ENCODE measurements at regions of chr7 and their contacts with region 1.

Region 1: GRCh38 chr7:30983042-30983913 is 19.5 kb downstream of the GHRHR start:
- DNase-seq: peak; percentile 97
- ATAC-seq: peak; percentile 62
- H3K4me3 Mint-ChIP-seq: peak overlapping the region; percentile 67
- H3K27ac Mint-ChIP-seq: no peak overlapping the region
- H3K4me1 Mint-ChIP-seq: peaks cover 53% of the 10 kb centered on the region
- H3K27me3 Mint-ChIP-seq: peaks cover 7% of the 10 kb centered on the region
- CTCF ChIP-seq: peak; percentile 90

Region 2: GRCh38 chr7:30791114-30791779 is 192.0 kb before region 1 on chr7:
- CTCF ChIA-PET with region 1: interaction called, 13 read pairs
- POLR2A ChIA-PET with region 1: no interaction called
- DNase-seq: peak; percentile 52
- ATAC-seq: peak; percentile 81
- H3K4me3 Mint-ChIP-seq: no peak overlapping the region
- H3K27ac Mint-ChIP-seq: no peak overlapping the region
- H3K4me1 Mint-ChIP-seq: peaks cover 7% of the 10 kb centered on the region; the same call in 1 of the 2 replicates
- H3K27me3 Mint-ChIP-seq: no peaks in the 10 kb centered on the region
- CTCF ChIP-seq: no peak

Region 3: DNA sequence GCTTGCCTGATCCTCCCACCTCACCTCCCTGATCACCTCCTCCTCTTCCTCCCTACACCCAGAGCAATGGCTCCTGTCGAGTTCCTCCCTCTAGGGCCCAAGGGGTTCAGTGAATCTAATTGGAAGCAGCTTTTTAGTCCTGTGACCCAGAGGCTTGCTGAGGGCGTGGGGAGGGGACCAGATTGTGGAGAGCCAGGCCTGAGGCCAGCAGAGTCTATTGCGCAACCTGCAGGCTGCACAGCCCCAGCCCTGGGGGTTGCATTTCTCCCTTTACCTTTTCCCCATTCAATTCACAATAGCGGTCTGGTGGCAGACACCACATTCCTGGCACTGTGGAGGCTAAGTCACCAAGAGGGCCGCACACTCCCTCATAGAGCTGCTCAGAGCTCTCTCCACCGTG is 13.0 kb after region 1 on chr7:
- CTCF ChIA-PET with region 1: interaction called, 17 read pairs
- POLR2A ChIA-PET with region 1: interaction called, 4 read pairs
- DNase-seq: no peak
- ATAC-seq: no peak
- H3K4me3 Mint-ChIP-seq: no peak overlapping the region
- H3K27ac Mint-ChIP-seq: no peak overlapping the region; the same call in 1 of the 2 replicates
- H3K4me1 Mint-ChIP-seq: peaks cover 6% of the 10 kb centered on the region
- H3K27me3 Mint-ChIP-seq: no peaks in the 10 kb centered on the region
- CTCF ChIP-seq: no peak

Region 4: DNA sequence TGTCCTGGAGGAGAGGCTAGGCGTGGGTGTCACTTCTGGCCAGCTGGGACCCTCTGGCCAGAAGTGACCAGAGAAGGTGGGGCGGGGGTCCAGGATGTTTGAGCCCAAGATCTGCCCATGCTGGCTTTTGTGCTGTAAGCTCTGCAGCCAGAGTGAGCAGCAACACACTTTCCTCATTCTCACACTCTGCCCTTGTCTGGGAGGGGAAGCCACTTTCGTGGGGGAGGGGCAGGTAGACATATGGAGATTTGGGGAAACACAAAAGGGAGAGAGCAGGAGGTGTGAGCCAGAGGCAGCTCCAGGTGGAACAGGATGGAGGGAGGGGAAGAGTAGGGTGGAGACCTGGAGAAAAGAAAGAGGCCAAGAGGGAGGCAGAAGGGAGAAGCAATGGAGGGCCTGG is 37.4 kb after region 1 on chr7:
- CTCF ChIA-PET with region 1: interaction called, 15 read pairs
- POLR2A ChIA-PET with region 1: interaction called, 3 read pairs
- DNase-seq: peak; percentile 39
- ATAC-seq: peak; percentile 84
- H3K4me3 Mint-ChIP-seq: no peak overlapping the region
- H3K27ac Mint-ChIP-seq: no peak overlapping the region
- H3K4me1 Mint-ChIP-seq: peaks cover 34% of the 10 kb centered on the region
- H3K27me3 Mint-ChIP-seq: no peaks in the 10 kb centered on the region
- CTCF ChIP-seq: no peak

Region 5: DNA sequence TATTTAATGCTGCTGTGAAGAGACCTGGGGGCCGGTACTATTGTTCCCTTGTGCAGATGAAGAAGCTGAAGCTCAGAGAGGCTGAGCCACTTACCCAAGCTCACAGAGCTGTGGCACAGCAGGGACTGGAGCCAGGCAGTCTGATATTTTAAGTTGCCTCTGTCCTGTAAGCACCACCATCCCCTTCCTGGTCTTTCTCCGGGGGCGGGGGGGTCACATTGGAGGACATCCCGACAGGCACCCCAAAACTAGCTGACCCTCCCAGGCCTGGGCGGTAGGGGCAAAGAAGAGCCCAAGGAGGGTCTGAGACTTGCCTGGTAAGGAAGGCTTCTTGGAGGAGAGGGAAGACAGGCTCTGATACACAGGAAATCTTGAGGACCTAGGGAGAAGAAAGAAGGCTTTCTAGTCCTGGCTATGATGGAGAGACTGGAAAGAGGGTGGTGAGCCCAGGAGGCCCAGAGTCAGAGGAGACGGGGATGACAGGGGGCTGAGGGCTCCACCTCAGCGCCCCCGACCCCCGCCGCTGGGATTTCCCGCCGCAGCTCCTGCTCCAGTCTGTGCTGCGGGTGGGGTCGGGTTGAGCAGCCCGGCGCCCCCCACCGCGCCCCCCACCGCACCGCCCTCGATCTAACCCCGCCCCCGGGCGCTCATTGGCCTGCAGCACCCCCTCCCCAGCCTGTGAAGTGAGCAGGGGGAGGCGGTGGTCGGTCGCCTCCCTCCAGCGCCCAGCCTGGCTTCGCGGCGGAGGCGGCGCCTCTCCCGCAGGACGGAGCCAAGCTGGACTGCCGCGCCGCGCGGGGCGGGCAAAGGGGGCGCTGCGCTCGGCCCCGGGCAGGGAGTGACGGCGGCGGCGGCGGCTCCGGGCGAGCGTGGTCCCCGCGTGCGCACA is 68.6 kb after region 1 on chr7 and contains the start of gene ADCYAP1R1:
- CTCF ChIA-PET with region 1: interaction called, 223 read pairs
- POLR2A ChIA-PET with region 1: interaction called, 5 read pairs
- DNase-seq: peak; percentile 68
- ATAC-seq: peak; percentile 86
- H3K4me3 Mint-ChIP-seq: peak within 1 kb of the TSS; percentile 76
- H3K27ac Mint-ChIP-seq: no peak within 1 kb of the TSS
- H3K4me1 Mint-ChIP-seq: peaks cover 26% of the 10 kb centered on the region
- H3K27me3 Mint-ChIP-seq: peaks cover 43% of the 10 kb centered on the region
- CTCF ChIP-seq: no peak
- total RNA-seq, gene ADCYAP1R1: 8.7 to 9.9 TPM (median 9.8 TPM) in 3 replicates

Region 6: DNA sequence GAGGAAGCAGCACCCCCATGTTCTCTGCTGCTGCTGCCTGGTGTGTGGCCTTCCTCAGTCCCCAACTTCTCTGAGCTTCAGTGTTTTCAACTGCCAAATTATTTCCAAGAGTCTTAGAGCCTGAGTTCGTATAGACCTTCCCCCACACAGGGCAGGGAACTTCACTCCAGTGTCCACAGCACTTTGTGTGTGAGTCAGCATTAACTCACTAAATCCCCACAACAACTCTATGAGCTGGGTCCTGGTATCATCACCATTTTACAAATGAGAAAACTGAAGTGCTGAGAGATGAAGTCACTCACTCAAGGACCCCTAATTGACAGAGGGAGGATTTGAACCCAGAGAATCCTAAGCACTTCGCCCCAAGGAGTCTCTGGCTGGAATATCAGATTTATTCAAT is 117.2 kb after region 1 on chr7:
- CTCF ChIA-PET with region 1: interaction called, 18 read pairs
- POLR2A ChIA-PET with region 1: no interaction called
- DNase-seq: no peak
- ATAC-seq: no peak
- H3K4me3 Mint-ChIP-seq: no peak overlapping the region
- H3K27ac Mint-ChIP-seq: no peak overlapping the region
- H3K4me1 Mint-ChIP-seq: no peaks in the 10 kb centered on the region
- H3K27me3 Mint-ChIP-seq: no peaks in the 10 kb centered on the region
- CTCF ChIP-seq: no peak

Measured in WTC11 (cell line).